ENCODE measurements at regions of chrX and their contacts with region 1.

Region 1: GRCh38 chrX:77910108-77910840 is at the start of gene ATP7A:
- DNase-seq: peak; percentile 88
- ATAC-seq: peak; percentile 87
- H3K4me3 ChIP-seq: peak within 1 kb of the TSS; percentile 99
- H3K27ac ChIP-seq: peak within 1 kb of the TSS; percentile 92
- H3K4me1 ChIP-seq: no peaks in the 10 kb centered on the region
- H3K27me3 ChIP-seq: no peaks in the 10 kb centered on the region
- CTCF ChIP-seq: peak; percentile 62
- POLR2A ChIP-seq: peak; percentile 76; the same call in 1 of the 2 replicates
- RAD21 ChIP-seq: peak; percentile 66
- total RNA-seq, gene ATP7A: 21.1 and 22.4 TPM in 2 replicates

Region 2: GRCh38 chrX:77679145-77679544 is 231.1 kb before region 1 on chrX:
- CTCF ChIA-PET with region 1: no interaction called
- POLR2A ChIA-PET with region 1: no interaction called
- dilution Hi-C with region 1: no loop called
- in situ Hi-C with region 1: no loop called
- intact Hi-C with region 1: no loop called
- DNase-seq: no peak
- ATAC-seq: no peak
- H3K4me3 ChIP-seq: no peak overlapping the region
- H3K27ac ChIP-seq: no peak overlapping the region
- H3K4me1 ChIP-seq: no peaks in the 10 kb centered on the region
- H3K27me3 ChIP-seq: no peaks in the 10 kb centered on the region
- CTCF ChIP-seq: no peak
- POLR2A ChIP-seq: no peak
- RAD21 ChIP-seq: no peak

Region 3: GRCh38 chrX:77930581-77930980 is 20.3 kb after region 1 on chrX:
- CTCF ChIA-PET with region 1: no interaction called
- POLR2A ChIA-PET with region 1: no interaction called
- dilution Hi-C with region 1: no loop called
- in situ Hi-C with region 1: no loop called
- intact Hi-C with region 1: no loop called
- DNase-seq: no peak
- ATAC-seq: no peak
- H3K4me3 ChIP-seq: no peak overlapping the region
- H3K27ac ChIP-seq: no peak overlapping the region
- H3K4me1 ChIP-seq: no peaks in the 10 kb centered on the region
- H3K27me3 ChIP-seq: no peaks in the 10 kb centered on the region
- CTCF ChIP-seq: no peak
- POLR2A ChIP-seq: no peak
- RAD21 ChIP-seq: no peak

Region 4: DNA sequence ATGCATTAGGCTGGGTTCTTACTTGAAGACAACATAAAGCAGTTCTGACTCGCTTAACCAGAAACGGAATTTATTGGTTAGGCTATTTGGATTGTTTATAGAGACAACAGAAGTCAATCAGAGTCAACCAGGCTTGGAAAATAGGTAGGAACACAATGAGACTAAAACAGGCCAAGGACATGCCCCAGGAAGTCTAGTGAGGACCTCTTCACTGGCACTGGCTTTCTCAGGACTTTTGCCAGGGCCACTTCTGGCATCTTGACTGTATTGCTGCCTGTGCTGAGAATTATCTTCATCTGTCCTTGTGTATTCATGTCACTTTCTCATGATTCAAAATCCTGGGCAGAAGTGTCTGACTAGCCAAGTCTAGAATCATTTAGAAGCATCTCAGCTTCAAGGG is 39.6 kb after region 1 on chrX:
- CTCF ChIA-PET with region 1: no interaction called
- POLR2A ChIA-PET with region 1: no interaction called
- dilution Hi-C with region 1: no loop called
- in situ Hi-C with region 1: no loop called
- intact Hi-C with region 1: no loop called
- DNase-seq: no peak
- ATAC-seq: no peak
- H3K4me3 ChIP-seq: no peak overlapping the region
- H3K27ac ChIP-seq: no peak overlapping the region
- H3K4me1 ChIP-seq: peaks cover 2% of the 10 kb centered on the region; the same call in 1 of the 2 replicates
- H3K27me3 ChIP-seq: no peaks in the 10 kb centered on the region
- CTCF ChIP-seq: no peak
- POLR2A ChIP-seq: no peak
- RAD21 ChIP-seq: no peak

Region 5: GRCh38 chrX:78019586-78020483 is 109.6 kb after region 1 on chrX:
- CTCF ChIA-PET with region 1: no interaction called
- POLR2A ChIA-PET with region 1: no interaction called
- dilution Hi-C with region 1: no loop called
- in situ Hi-C with region 1: loop called (anchors 10 kb)
- intact Hi-C with region 1: no loop called
- DNase-seq: no peak
- ATAC-seq: no peak
- H3K4me3 ChIP-seq: no peak overlapping the region
- H3K27ac ChIP-seq: no peak overlapping the region
- H3K4me1 ChIP-seq: no peaks in the 10 kb centered on the region
- H3K27me3 ChIP-seq: no peaks in the 10 kb centered on the region
- CTCF ChIP-seq: no peak
- POLR2A ChIP-seq: no peak
- RAD21 ChIP-seq: no peak

Region 6: DNA sequence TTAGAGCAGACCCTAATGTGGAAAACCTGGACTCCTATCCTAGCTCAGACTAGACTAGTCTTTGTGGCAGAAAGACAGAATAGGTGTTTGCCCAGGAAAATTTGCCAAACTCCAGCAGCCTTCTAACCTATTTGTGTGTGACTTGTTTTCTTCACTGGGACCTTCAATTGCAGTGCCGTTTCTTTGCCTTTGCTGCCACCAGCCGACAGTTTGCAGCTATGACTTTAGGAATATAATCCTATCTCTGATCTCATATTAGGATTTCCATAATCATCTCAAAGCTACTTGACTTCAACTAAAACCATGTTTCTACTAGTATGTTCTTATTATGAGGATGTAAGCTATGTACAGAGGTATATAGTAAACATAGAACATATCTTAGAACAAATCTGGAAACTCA is 119.4 kb after region 1 on chrX:
- CTCF ChIA-PET with region 1: no interaction called
- POLR2A ChIA-PET with region 1: no interaction called
- dilution Hi-C with region 1: no loop called
- in situ Hi-C with region 1: no loop called
- intact Hi-C with region 1: loop called (anchors 1 kb)
- DNase-seq: peak; percentile 33
- ATAC-seq: peak; percentile 68; the same call in 1 of the 2 replicates
- H3K4me3 ChIP-seq: no peak overlapping the region
- H3K27ac ChIP-seq: no peak overlapping the region
- H3K4me1 ChIP-seq: no peaks in the 10 kb centered on the region
- H3K27me3 ChIP-seq: no peaks in the 10 kb centered on the region
- CTCF ChIP-seq: peak; percentile 62
- POLR2A ChIP-seq: no peak
- RAD21 ChIP-seq: peak; percentile 76

Region 7: DNA sequence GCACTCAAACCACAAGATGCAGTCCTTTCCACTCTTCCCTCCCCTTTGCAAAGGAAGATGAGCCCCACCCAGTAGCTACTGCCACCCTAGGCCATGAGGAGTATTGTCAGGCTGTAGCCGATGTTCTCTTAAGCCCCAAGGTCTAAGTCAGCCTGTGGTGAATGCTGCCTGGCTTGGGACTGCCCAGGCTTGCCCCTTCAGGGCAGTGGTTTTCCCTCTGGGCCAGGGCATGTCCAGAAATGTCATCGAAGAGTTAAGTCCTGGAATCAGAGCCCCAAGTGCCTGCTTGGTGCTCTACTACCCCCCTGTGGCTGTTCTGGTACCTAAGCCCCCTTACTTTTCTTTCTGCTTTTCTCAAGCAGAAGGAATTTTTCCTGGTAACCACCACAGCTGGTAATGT is 182.0 kb after region 1 on chrX:
- CTCF ChIA-PET with region 1: interaction called, 3 read pairs
- POLR2A ChIA-PET with region 1: no interaction called
- dilution Hi-C with region 1: no loop called
- in situ Hi-C with region 1: no loop called
- intact Hi-C with region 1: loop called (anchors 1 kb)
- DNase-seq: peak; percentile 71
- ATAC-seq: peak; percentile 94
- H3K4me3 ChIP-seq: no peak overlapping the region
- H3K27ac ChIP-seq: peak overlapping the region; percentile 45; the same call in 1 of the 2 replicates
- H3K4me1 ChIP-seq: peaks cover 2% of the 10 kb centered on the region; the same call in 1 of the 2 replicates
- H3K27me3 ChIP-seq: no peaks in the 10 kb centered on the region
- CTCF ChIP-seq: peak; percentile 66
- POLR2A ChIP-seq: no peak
- RAD21 ChIP-seq: peak; percentile 75

Measured in IMR-90 (cell line).